ENCODE measurements at regions of chr6 and their contacts with region 1.

Region 1: DNA sequence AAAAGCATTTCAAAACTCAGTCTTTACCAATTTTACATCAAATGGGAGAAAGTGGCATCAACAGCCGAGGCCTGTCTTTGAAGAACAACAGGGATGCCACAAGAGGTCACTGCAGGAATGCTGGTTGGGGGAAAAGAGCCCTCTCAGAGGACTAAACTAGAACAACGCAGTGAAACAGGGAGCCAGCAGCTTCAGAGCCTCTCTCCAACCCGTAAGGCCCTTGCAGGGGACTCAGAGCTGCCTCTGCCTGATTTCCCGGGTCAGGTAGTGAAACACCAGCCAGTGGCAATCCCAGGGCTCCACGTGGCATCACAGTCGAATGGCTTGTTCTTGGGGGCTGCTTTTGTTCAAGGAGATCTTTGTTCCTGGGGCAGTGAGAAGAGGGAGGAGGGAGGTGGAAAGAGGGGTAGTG is 55.0 kb upstream of the KCNK16 start:
- ATAC-seq: peak; percentile 96 to 100 (median 98)
- H3K4me3 ChIP-seq: no peak overlapping the region
- H3K27ac ChIP-seq: no peak overlapping the region
- H3K4me1 ChIP-seq: peaks cover 5 to 10% of the 10 kb centered on the region in 2 donors

Region 2: DNA sequence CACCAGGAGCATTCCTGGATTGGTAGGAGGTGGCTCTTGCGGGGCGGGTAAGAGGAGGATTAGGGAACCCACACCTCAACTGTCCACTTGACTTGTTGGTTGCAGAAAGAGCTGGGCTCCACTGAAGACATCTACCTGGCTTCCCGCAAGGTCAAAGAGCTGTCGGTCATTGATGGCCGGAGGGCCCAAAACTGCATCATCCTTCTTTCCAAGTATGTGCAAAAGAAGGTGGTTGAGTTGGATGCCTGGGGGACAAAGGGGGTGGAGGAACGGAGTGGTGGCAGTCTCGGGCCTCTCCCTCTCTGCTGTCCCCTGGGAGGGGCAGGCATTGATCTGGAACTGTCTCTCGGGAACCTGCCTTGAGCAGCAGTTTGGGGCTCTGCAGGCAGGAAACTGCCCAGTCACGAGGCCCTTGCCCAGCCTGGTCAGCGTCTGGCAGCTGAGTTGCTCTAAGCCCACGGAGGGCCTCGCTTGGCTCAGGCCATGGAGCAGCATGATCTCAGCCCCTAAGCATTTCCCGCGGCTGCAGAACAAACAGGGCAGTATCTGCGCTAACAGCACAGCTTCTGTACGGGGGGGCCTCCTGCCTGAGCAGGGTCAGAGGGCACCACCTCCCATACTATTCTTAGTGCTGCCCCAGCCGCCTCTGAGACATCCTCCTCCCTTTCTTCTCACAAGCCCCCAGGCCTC is 510.0 kb after region 1 on chr6:
- in situ Hi-C with region 1: loop called in 3 of 9 experiments (anchors 10 to 25 kb)
- ATAC-seq: peak in 7 of 8 experiments; percentile 27 to 95 (median 81)
- H3K4me3 ChIP-seq: no peak overlapping the region
- H3K27ac ChIP-seq: no peak overlapping the region
- H3K4me1 ChIP-seq: no peaks in the 10 kb centered on the region

Region 3: GRCh38 chr6:39892490-39893129 is 515.1 kb after region 1 on chr6:
- in situ Hi-C with region 1: loop called in 3 of 9 experiments (anchors 10 to 25 kb)
- ATAC-seq: peak; percentile 54 to 84 (median 66)
- H3K4me3 ChIP-seq: no peak overlapping the region
- H3K27ac ChIP-seq: no peak overlapping the region
- H3K4me1 ChIP-seq: no peaks in the 10 kb centered on the region